Activated T-helper 2 cell treated with anti-CD3 and anti-CD28 coated beads, Interferon-gamma antibody, Interleukin-2, Interleukin-4, amounts not matched to agents 10 μg/mL and 5 μg/mL and 100 μg/mL, durations not matched to agents 14 hours and 24 hours and 36 hours (primary cell): ENCODE measurements at regions of chr20 and their contacts with region 1.

Region 1: DNA sequence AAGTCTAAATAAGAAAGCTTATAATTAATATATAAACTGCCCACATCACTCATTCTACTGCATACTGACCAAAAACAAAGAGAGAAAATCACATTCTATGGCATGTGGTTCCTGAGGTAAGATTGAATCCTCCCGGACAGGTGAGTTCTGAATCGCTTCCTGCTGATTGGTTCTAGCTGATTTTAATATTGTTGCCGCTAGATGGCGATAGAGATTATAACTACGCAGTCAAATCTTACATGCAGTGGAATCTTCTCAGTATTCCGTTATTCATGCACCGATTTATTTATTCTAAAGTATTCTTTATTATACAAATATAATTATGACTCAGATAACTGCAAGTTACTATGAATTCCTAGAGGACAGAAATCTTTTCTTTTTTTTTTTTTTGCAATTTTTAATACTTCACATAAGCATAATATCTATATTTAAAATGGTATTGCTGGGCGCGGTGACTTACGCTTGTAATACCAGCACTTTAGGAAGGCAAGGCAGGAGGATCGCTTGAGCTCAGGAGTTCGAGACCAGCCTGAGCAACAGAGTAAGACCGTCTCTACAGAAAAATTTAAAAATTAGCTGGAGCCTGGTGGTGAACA is 24.2 kb upstream of the TMX4 start:
- DNase-seq: no peak
- H3K4me3 Mint-ChIP-seq: no peak overlapping the region
- H3K27ac Mint-ChIP-seq: no peak overlapping the region
- H3K4me1 Mint-ChIP-seq: peaks cover 2% of the 10 kb centered on the region
- H3K27me3 Mint-ChIP-seq: peaks cover 44% of the 10 kb centered on the region

Region 2: DNA sequence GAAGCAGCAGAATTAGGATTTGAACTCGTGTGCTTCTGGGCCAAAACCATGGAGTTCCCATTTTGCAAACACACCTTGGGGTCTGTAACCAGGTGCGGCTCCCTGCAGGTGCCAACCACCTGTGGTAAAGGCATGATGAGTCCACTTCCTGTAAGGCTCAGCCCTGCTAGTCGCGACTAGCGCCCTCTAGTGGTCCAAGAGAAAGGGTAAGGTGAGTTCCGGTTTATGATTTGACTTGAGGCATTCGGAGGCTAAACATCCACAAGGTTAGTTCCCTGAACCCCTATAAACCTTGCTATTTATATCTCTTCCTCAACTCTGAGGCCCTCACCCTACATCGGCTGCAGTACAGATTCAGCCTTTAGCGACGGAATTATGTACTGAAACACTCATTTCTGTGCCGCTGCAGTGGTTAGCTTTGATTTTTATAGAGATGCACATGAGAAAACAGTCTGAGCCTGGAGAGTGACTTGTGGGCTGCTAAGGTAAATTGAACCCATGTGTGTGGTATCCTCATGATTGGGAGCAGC is 261.7 kb after region 1 on chr20:
- intact Hi-C with region 1: loop called (anchors 5 kb)
- DNase-seq: peak; percentile 53
- H3K4me3 Mint-ChIP-seq: no peak overlapping the region
- H3K27ac Mint-ChIP-seq: no peak overlapping the region
- H3K4me1 Mint-ChIP-seq: peaks cover 7% of the 10 kb centered on the region
- H3K27me3 Mint-ChIP-seq: peaks cover 12% of the 10 kb centered on the region

Region 3: DNA sequence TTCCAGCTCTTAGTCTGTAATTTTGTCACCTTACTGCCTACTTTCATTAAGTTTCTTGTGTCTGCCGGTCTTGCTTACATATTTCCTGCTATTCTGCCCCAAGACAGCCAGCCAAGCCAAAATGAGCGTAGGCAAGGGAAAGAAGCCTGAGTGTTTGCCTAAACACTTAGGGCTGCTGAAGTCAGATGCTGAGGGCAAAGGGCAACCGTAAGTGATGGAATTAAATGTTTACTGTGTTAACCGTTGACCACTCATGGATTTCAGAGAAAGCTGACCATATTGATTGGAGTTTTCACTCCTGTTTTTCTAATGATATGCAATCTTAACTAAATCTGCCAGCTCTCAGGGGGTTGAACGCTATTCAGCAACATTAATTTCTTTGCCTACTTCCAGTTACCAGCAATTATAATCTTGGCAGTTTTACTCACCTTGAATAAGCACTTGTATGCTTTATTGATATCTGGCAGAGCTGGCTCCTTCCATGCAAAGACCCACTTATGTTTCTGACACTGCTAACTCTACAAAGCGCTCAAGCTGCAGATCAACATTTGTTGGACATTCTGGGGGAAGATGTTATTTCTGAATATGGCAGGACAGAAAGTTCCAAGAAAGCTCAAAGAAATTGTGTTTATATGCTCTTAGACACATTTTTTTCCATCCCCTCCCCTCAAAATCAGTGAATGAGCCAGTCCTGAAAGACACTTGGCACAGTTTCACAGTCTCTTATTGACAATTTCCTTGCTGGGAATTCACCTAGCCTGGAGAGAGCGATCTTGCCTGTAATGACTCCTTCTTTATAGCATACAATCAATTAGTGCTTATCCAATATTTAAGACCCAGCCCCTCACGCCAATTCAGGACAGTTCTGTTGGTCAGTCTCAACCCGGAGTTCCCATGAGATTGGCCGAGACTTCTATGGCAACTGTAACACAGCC is 272.1 kb after region 1 on chr20:
- intact Hi-C with region 1: no loop called
- DNase-seq: no peak
- H3K4me3 Mint-ChIP-seq: no peak overlapping the region
- H3K27ac Mint-ChIP-seq: no peak overlapping the region
- H3K4me1 Mint-ChIP-seq: no peaks in the 10 kb centered on the region
- H3K27me3 Mint-ChIP-seq: peaks cover 6% of the 10 kb centered on the region

Region 4: GRCh38 chr20:8389381-8390036 is 345.7 kb after region 1 on chr20:
- intact Hi-C with region 1: loop called (anchors 1 kb)
- DNase-seq: no peak
- H3K4me3 Mint-ChIP-seq: no peak overlapping the region
- H3K27ac Mint-ChIP-seq: no peak overlapping the region
- H3K4me1 Mint-ChIP-seq: peaks cover 6% of the 10 kb centered on the region
- H3K27me3 Mint-ChIP-seq: peaks cover 21% of the 10 kb centered on the region

Region 5: GRCh38 chr20:8535403-8536261 is 491.8 kb after region 1 on chr20:
- intact Hi-C with region 1: loop called (anchors 5 kb)
- DNase-seq: no peak
- H3K4me3 Mint-ChIP-seq: no peak overlapping the region
- H3K27ac Mint-ChIP-seq: no peak overlapping the region
- H3K4me1 Mint-ChIP-seq: no peaks in the 10 kb centered on the region
- H3K27me3 Mint-ChIP-seq: no peaks in the 10 kb centered on the region

Region 6: DNA sequence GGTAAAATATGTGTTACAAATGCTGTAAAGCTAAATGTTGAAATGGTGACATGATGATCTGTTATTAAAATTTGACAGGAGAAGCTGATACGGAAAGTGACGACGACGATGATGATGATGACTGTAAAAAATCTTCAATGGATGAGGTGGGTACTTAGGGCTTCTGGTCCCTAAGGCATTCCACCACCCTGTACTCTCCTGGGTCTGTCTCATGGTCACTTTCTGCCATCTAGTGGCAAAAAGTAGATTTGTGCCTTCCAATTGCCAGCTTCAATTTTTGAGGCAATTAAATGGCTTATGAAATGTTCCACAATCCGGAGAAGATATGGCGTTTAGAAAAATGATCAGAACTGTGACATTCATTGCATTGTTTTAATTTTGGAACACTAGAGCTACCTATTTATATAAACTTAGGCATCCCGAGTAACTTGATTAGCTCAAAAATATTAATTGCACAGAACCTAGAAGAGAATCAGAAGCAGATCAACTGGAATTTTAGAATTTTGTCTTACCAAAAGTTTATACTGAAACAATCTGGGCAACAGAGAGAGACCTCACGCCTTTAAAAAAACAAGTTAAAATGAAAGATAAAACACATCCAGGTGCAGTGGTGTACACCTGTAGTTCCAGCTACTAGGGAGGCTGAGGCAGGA is 678.6 kb after region 1 on chr20:
- intact Hi-C with region 1: loop called (anchors 1 kb)
- DNase-seq: no peak
- H3K4me3 Mint-ChIP-seq: no peak overlapping the region
- H3K27ac Mint-ChIP-seq: no peak overlapping the region
- H3K4me1 Mint-ChIP-seq: no peaks in the 10 kb centered on the region
- H3K27me3 Mint-ChIP-seq: no peaks in the 10 kb centered on the region